ENCODE measurements at regions of chr1 and their contacts with region 1.

Region 1: GRCh38 chr1:45037456-45037855 is 25.4 kb downstream of the UROD start:
- DNase-seq: no peak
- H3K4me3 Mint-ChIP-seq: no peak overlapping the region
- H3K27ac Mint-ChIP-seq: no peak overlapping the region
- H3K4me1 Mint-ChIP-seq: peaks cover 12% of the 10 kb centered on the region
- H3K27me3 Mint-ChIP-seq: no peaks in the 10 kb centered on the region

Region 2: DNA sequence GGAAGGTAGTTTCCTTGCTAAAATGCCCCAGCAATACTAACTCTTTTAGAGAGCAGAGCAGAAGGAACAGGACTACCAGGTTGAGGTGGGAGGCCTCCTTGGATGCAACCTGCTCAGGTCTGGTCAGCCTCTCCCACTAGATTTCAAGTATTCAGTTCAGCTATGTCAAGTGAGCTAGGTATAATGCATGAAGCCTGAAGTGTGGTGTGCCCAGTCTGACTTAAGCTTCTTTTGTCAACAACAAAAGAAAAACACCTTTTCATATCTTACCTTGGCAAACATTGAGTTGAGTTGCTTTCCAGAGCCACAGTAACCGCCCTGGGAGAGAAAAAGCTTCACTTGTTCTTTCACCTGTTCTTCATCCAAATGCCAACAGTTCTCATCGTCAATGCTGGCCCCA is 22.4 kb after region 1 on chr1:
- CTCF ChIA-PET with region 1: no interaction called
- POLR2A ChIA-PET with region 1: interaction called, 11 read pairs
- DNase-seq: no peak
- H3K4me3 Mint-ChIP-seq: no peak overlapping the region
- H3K27ac Mint-ChIP-seq: no peak overlapping the region
- H3K4me1 Mint-ChIP-seq: no peaks in the 10 kb centered on the region
- H3K27me3 Mint-ChIP-seq: peaks cover 3% of the 10 kb centered on the region

Region 3: GRCh38 chr1:45385302-45385701 is 347.8 kb after region 1 on chr1:
- CTCF ChIA-PET with region 1: no interaction called
- POLR2A ChIA-PET with region 1: no interaction called
- DNase-seq: no peak
- H3K4me3 Mint-ChIP-seq: no peak overlapping the region
- H3K27ac Mint-ChIP-seq: no peak overlapping the region
- H3K4me1 Mint-ChIP-seq: no peaks in the 10 kb centered on the region
- H3K27me3 Mint-ChIP-seq: no peaks in the 10 kb centered on the region

Measured in activated CD4-positive, alpha-beta T cell treated with anti-CD3 and anti-CD28 coated beads, Interleukin-2, amount 10 ng/mL, durations not matched to agents 7 days and 5 days (primary cell).